ENCODE measurements at regions of chr3 and their contacts with region 1.

Region 1: GRCh38 chr3:177220136-177220974 is 23.1 kb upstream of the TBL1XR1 start:
- DNase-seq: no peak
- ATAC-seq: peak; percentile 9
- H3K4me3 ChIP-seq: no peak overlapping the region
- H3K27ac ChIP-seq: no peak overlapping the region
- H3K4me1 ChIP-seq: no peaks in the 10 kb centered on the region
- H3K27me3 ChIP-seq: no peaks in the 10 kb centered on the region
- CTCF ChIP-seq: no peak

Region 2: DNA sequence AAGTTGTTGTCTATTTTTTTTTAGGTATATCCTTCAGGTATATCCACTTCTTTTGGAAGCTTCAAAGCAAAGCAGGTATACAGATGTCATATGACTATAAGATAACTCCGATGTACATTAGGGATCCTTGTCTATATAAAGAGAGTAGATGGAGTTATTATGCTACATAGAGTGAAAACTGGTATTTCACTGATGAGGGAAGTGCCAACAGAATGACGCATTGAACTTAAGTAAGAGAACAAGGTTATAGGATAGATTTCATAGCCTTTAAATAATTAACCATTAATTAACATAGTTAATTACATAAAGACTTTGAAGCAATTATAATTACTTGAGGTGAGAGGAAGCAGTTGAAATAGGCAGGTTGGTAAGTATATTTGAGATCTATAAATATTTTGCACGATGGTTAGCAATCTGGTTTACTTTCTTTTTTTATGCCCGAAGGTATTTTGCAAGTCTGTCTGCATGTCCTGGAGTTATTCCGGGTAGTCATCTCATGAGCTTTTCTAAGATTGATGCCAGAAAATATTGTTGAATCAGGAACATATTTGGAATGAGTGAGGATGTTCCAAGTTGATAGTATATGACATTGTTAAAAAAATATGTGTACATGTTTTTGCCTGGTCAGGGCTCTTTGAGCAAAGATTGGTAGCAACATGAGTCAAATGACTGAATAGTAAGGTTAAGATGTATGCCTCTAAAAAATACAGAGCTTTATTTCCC is 1016.4 kb after region 1 on chr3:
- intact Hi-C with region 1: loop called (anchors 10 kb)
- DNase-seq: no peak
- ATAC-seq: no peak
- H3K4me3 ChIP-seq: no peak overlapping the region
- H3K27ac ChIP-seq: no peak overlapping the region
- H3K4me1 ChIP-seq: no peaks in the 10 kb centered on the region
- H3K27me3 ChIP-seq: no peaks in the 10 kb centered on the region
- CTCF ChIP-seq: no peak

Measured in upper lobe of right lung (tissue), 1 donor.